Prostate gland (tissue), 2 donors: ENCODE measurements at regions of chr3 and their contacts with region 1.

Region 1: DNA sequence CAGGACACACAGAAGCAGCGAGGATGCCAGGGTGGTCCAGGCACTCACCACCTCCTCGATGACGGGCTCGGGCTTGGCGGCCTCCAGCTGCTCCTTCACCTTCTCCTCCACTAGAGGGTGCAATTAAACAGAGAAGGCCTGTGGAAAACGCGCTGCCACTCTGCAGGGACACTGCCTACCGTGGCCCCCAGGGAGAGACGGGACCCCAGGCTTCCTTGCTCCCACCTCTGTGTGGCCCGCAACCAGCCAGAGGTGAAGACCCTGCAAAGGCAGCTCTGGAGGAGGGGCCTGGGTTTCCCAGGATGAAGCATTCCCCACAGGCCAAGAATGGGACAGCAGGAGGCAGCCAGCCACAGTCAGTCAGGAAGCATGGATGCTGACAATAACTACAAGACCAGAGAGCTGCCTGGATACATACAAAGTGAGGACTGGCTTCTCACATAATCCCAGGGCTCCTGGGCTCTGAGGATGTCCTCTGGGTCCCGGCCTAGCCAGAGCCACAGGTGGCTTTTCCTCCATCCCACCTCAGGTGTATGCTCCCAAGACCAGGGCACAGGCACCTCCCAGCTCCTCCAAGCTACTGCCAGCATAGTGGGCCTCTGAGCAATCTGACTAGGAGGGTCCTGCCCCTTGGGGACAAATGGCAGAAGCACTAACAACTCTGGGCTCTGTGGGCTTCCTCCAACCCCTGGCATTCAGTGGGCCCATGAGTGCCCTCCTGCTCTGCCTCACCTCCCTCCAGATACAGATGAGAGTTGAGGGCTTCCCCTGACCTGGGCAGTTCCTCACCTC is 46.2 kb downstream of the PTH1R start:
- DNase-seq: no peak
- H3K4me3 ChIP-seq: no peak overlapping the region
- H3K27ac ChIP-seq: no peak overlapping the region
- H3K4me1 ChIP-seq: no peaks in the 10 kb centered on the region
- H3K27me3 ChIP-seq: no peaks in the 10 kb centered on the region
- CTCF ChIP-seq: peak in 3 of 4 experiments; percentile 56 to 87 (median 60)
- POLR2A ChIP-seq: no peak

Region 2: DNA sequence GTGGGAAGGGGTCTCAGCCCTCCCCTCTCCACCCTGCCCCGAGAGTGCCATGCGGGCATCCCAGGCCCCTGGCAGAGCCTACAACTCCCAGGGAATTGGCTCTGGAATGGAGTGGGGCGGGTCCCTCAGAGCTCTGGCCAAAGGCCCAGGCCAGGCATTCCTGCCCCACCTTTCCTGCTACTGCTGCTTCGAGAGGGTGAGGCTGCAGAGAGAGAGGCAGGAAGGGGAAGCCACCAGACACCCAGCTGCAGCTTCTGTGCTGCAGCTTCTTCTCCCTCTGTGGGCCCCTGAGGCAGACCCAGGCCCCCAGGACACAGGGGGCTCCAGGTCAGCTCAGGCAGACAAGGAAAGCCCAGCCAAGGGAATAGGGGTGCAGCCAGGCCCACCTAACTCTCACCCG is 233.0 kb before region 1 on chr3:
- intact Hi-C with region 1: no loop called
- DNase-seq: peak; percentile 32
- H3K4me3 ChIP-seq: no peak overlapping the region
- H3K27ac ChIP-seq: no peak overlapping the region
- H3K4me1 ChIP-seq: peaks cover 5% of the 10 kb centered on the region
- H3K27me3 ChIP-seq: no peaks in the 10 kb centered on the region
- CTCF ChIP-seq: no peak
- POLR2A ChIP-seq: peak; percentile 46

Region 3: DNA sequence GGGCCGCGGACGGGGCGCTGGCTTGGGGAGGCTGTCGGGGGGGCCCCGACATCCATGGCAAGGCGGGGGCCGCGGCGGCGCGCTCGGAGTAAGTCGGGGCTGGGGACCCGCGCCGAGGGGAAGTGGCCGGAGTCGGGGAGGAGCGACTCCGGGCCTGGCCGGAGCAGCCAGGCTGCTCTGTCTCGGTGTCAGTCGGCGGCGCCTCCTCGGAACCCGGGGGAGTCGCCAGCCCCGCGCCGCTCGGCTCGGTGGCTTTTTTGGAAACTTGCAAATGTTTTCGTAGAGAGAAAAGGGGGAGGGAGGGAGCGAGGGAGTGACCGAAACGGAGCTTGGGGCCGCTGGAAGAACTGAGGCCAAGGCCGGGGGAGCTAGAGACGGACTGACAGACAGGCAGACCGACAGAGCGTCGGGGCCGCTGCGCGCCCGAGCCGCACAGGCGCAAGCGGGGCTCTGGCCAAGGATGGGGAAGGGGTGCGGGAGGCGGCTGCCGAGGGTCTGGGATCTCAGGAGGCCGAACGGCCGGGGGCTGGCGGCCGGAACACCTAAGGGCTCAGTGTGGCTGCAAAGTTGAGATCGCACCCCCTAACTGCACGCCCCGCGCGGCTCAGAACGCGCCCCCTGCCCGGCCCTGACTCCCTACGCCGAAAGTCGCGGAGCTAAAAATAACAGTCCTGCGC is 41.2 kb before region 1 on chr3:
- intact Hi-C with region 1: no loop called
- DNase-seq: no peak
- H3K4me3 ChIP-seq: peak overlapping the region; percentile 42
- H3K27ac ChIP-seq: peak overlapping the region; percentile 54 to 56
- H3K4me1 ChIP-seq: no peaks in the 10 kb centered on the region
- H3K27me3 ChIP-seq: peaks cover 5% of the 10 kb centered on the region
- CTCF ChIP-seq: no peak
- POLR2A ChIP-seq: no peak

Region 4: DNA sequence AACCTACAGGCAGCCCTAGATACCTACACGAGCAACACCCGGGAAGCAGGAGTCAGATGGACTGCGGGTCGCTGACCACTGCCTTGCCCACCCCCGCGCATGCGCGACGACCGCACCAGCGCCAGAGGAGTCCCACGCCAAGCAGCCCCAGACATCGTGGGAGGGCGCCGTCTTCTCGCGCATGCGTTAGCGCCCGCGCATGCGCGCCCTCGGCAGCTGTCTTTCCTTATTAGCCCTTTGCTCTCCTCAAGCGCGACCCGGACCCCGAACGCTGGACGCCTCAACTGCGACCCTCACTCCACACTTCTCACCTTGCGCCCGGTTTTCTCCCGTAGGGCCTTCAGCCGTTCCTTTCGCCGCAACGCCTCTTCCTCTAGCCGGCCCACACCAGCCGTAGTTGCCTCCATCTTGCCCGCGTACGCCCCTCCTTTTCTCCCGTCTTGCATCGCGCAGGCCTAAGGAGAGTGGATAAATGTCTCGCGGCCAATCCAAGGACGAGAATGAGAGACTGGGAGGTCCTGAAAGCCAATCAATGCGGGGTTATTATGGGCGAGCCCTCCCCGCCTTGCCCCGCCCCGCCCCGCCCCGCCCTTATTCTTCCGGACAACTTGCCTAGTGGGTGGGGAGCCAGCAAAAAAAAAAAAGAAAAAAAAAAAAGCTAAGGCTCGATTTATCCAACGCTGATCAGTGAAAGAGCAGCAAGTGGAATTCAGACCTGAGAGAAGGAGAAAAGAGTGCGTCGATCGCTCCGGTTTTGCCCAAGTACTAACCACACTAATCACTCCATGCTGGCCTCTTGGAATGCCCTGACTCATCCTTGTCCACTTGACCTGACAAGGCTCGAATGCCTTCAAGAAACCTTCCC is 52.8 kb after region 1 on chr3 and contains the start of gene CCDC12:
- intact Hi-C with region 1: no loop called
- DNase-seq: peak; percentile 98
- H3K4me3 ChIP-seq: peak within 1 kb of the TSS; percentile 61 to 66
- H3K27ac ChIP-seq: peak within 1 kb of the TSS; percentile 93
- H3K4me1 ChIP-seq: peaks cover 3% of the 10 kb centered on the region
- H3K27me3 ChIP-seq: no peaks in the 10 kb centered on the region
- CTCF ChIP-seq: peak in 2 of 4 experiments; percentile 16 to 26
- POLR2A ChIP-seq: peak; percentile 69
- total RNA-seq, gene CCDC12: 34.6 to 78.7 TPM

Region 5: DNA sequence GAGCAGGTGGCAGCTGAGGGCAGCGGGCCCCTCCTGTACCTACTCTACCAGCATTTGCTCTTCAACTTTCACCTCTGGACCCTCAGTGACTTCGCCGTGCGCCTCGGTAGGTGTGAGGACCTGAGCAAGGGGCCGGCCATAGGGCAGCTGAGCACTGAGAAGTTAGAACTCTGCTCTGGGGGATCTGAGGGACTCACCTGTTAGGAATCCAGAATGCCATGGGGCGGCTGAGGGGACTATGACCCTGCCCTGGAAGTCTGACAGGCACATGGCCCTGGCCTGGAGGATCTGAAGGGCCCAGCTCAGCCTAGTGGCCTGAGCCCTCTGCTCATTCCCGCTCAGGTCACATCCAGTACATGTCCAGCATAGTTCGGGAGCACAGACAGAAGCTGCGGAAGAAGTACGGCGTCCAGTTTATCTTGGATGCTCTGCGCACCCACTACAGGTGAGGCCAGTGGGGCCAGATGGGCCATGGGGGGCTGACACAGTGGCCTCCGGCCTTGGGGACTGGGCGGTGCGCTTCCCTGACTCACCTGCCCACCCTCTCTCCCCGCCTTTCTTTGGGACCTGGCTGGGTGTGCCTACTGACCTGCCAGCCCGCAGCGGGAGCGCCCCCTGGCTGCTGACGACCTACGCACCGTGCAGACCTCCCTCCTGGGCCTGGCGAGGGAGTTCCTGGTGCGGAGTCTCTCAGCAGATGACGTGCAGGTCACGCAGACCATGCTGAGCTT is 74.5 kb after region 1 on chr3:
- intact Hi-C with region 1: loop called (anchors 5 kb)
- DNase-seq: peak; percentile 65
- H3K4me3 ChIP-seq: no peak overlapping the region
- H3K27ac ChIP-seq: no peak overlapping the region
- H3K4me1 ChIP-seq: no peaks in the 10 kb centered on the region
- H3K27me3 ChIP-seq: no peaks in the 10 kb centered on the region
- CTCF ChIP-seq: peak; percentile 62 to 93 (median 87)
- POLR2A ChIP-seq: no peak

Region 6: DNA sequence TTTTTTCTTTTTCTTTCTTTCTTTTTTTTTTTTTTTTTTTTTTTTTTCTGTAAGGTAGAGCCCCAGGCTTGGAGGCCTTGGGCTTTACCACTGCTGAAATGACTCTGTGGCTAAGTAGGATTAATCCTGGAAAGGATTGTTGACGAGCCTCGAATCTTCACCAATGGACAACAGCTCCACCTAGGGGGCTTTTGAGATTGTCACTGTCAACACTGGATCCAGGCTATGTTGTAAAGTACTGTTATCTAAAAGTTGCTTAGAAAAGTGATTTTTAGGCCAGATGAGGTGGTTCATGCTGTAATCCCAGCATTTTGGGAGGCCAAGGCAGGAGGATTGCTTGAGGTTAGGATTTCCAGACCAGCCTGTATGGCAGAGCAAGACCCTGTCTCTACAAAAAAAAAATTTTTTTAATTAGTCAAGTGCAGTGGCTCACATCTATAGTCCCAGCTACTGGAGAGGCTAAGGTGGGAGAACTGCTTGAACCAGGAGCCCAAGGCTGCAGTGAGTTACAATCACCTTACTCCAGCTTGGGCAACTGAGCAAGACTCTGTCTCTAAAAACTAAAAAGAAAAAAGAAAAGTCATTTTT is 400.6 kb after region 1 on chr3:
- intact Hi-C with region 1: loop called (anchors 5 kb)
- DNase-seq: peak; percentile 56
- H3K4me3 ChIP-seq: no peak overlapping the region
- H3K27ac ChIP-seq: no peak overlapping the region
- H3K4me1 ChIP-seq: no peaks in the 10 kb centered on the region
- H3K27me3 ChIP-seq: no peaks in the 10 kb centered on the region
- CTCF ChIP-seq: peak; percentile 19 to 77 (median 59)
- POLR2A ChIP-seq: no peak